Motor neuron (in vitro differentiated cells): ENCODE measurements at regions of chr6 and their contacts with region 1.

Region 1: DNA sequence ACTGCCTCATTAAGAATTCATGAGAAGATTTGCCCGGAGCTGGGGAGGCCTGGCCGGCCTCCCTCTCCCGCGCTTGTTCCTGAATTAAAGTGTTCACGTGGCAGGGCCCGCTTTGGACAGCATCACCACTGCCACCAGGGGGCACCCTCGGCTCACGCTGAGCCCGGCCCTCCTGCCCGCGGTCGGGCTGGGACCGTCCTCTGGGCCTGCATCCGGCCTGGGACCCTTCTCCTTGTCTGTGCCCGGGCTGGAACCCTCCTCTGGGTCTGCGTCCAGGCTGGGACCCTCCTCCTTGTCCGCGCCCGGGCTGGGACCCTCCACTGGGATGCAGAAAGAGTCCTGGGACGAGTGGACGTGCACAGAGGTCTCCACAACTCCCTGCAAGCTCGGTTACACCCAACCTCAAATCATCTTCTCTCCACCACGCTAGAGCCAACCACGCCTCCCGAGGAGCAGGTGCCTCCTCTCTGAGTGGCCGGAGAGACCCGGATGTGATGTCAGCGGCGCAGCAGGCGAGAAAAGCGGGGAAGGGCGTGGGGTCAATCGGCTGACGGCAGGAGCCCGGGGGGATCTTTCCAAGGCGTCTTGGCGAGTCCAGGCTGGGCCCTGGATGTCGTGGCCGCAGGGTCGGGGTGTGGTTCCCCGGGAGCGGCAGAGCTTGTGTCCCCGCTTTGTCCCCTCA is 50.9 kb upstream of the DACT2 start:
- ATAC-seq: peak in 7 of 8 experiments; percentile 55 to 95 (median 92)
- H3K4me3 ChIP-seq: no peak overlapping the region
- H3K27ac ChIP-seq: no peak overlapping the region
- H3K4me1 ChIP-seq: peaks cover 9 to 25% of the 10 kb centered on the region in 2 donors

Region 2: DNA sequence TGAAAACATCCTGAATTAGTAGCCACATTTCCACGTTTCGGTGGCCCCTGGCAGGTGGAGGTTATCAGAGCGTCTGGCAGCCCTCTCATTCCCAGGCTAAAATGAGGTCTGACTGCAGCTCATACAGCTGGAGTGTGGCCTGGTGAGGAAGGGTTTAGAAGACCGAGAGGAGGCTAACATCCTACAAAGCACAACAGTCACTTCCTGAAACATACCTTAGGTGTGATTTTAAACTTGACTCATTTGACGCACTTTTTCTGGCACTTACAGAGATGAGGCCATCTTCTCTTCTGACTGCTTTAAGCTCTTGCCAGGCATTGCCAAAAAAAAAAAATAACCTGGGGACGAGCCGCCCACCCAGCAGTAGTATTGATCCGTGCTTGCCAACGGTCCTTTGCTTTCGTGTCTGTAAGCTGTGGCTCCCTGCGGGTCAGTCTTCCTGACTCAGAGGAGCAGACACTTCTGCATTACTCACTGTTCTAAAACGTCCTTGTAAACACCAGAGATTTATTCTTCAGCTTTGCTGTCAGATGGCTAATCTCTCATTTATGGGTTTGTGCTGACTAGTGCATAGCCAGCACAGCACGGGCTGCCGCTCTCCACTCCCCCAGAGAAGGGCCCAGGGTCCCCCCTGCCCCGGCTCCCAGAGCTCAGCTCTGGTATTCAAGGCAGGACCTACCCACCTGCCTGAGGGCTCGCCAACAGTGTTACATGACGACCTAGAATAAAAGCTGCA is 213.0 kb before region 1 on chr6:
- in situ Hi-C with region 1: loop called in 1 of 9 experiments (anchors 25 kb)
- ATAC-seq: peak; percentile 17 to 93 (median 90)
- H3K4me3 ChIP-seq: no peak overlapping the region
- H3K27ac ChIP-seq: peak overlapping the region; percentile 73 to 77
- H3K4me1 ChIP-seq: peaks cover 47 to 56% of the 10 kb centered on the region in 2 donors

Region 3: GRCh38 chr6:169362501-169363121 is 992.2 kb after region 1 on chr6:
- in situ Hi-C with region 1: no loop called
- ATAC-seq: no peak
- H3K4me3 ChIP-seq: no peak overlapping the region
- H3K27ac ChIP-seq: no peak overlapping the region
- H3K4me1 ChIP-seq: peaks cover 0 to 13% of the 10 kb centered on the region in 2 donors